ENCODE measurements at regions of chr11 and their contacts with region 1.

Region 1: DNA sequence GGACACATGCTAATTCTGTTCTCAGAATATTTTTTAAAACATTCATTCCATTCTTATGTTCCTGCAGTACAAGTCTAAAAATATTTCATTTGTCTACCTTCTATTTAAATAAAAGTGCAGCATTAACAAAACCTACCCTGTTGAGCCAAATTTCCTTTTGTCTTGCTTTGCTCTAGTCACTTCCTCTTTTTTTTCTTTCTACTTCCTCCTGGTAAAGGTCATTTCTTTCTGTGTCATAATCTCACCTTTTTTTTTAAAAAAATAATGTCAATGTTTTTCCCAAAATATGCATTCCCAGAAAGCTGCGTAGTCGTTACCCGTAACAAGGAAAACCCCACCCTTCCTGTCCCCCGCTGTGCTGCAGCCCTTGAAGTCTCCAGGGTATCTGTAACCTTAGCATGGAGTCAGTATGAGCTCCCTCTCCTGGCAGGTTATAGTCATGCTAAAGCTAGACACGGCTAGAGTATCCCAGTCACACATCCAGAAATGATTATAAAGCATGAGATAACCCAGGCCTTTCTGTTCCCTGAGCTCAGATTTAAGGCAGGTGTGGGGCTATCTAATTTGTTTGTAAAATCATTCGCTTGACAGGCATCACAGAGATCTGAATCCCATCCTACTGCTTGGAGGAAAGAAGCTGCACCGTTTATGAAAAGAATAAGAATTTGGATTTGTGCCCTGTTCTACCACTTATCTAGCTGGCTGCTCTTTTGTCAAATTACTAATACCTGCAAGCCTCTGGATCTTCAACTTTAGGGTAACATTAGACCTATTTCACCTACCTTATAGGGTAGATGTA is 51.1 kb upstream of the EED start:
- DNase-seq: peak; percentile 73
- ATAC-seq: peak; percentile 98

Region 2: DNA sequence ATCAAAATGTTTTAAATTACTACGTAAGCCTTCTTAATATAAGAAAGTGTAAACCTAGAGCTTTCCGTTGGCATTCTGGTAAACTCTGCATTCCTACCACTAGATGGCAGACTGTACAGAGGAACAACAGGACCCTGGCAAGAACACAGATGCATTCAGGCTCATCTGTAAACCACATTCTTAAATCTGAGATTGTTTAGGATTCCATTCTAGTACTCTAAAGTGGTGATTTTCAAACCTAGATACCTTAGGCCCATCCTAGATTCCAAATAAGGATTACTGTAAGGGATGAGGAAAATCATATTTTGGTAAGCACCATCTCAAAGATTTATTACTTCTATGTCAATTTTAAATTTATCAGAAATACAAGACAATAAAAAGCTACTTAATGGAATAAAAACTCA is 151.5 kb before region 1 on chr11:
- intact Hi-C with region 1: loop called (anchors 5 kb)
- DNase-seq: no peak
- ATAC-seq: peak; percentile 85